Activated CD4-positive, alpha-beta memory T cell treated with anti-CD3 and anti-CD28 coated beads, Interleukin-2, amount 10 ng/mL, durations not matched to agents 7 days and 5 days (primary cell): ENCODE measurements at regions of chr13 and their contacts with region 1.

Region 1: GRCh38 chr13:24642219-24642618 is 38.0 kb upstream of the ATP12A start:
- DNase-seq: no peak
- H3K4me3 Mint-ChIP-seq: no peak overlapping the region
- H3K27ac Mint-ChIP-seq: peak overlapping the region; percentile 65
- H3K4me1 Mint-ChIP-seq: peaks cover 20% of the 10 kb centered on the region
- H3K27me3 Mint-ChIP-seq: peaks cover 2% of the 10 kb centered on the region

Region 2: GRCh38 chr13:24627099-24627714 is 15.0 kb before region 1 on chr13:
- CTCF ChIA-PET with region 1: interaction called, 14 read pairs
- POLR2A ChIA-PET with region 1: interaction called, 6 read pairs
- DNase-seq: no peak
- H3K4me3 Mint-ChIP-seq: no peak overlapping the region
- H3K27ac Mint-ChIP-seq: peak overlapping the region; percentile 99
- H3K4me1 Mint-ChIP-seq: peaks cover 67% of the 10 kb centered on the region
- H3K27me3 Mint-ChIP-seq: no peaks in the 10 kb centered on the region

Region 3: GRCh38 chr13:24661713-24662112 is 19.5 kb after region 1 on chr13:
- CTCF ChIA-PET with region 1: no interaction called
- POLR2A ChIA-PET with region 1: no interaction called
- DNase-seq: no peak
- H3K4me3 Mint-ChIP-seq: no peak overlapping the region
- H3K27ac Mint-ChIP-seq: no peak overlapping the region
- H3K4me1 Mint-ChIP-seq: peaks cover 6% of the 10 kb centered on the region
- H3K27me3 Mint-ChIP-seq: peaks cover 9% of the 10 kb centered on the region